ENCODE measurements at regions of chrX and their contacts with region 1.

Region 1: DNA sequence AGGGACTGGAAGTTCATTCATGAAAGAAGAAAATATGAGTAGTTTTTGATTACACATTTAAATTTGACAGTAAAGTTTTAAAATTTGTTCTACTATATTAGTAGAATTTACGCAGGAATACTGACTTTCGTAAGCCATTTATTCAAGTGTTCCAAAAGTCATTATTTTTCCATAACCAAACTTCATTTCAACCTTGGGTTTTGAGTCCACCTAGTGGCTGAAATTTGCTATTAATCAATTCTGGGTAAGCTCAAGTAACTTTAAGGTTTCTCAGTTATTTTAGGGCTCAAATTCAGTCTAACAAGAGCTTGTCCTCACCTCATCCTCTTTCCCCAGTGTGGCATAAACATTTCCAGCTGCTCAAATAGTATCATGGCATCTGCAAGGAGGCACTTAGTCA is 175.4 kb downstream of the SH3BGRL start:
- DNase-seq: peak in 3 of 5 donors; percentile 1 to 8 (median 2)
- H3K4me3 ChIP-seq: no peak overlapping the region
- H3K4me3 Mint-ChIP-seq: no peak overlapping the region
- H3K27ac ChIP-seq: no peak overlapping the region
- H3K27ac Mint-ChIP-seq: no peak overlapping the region
- H3K4me1 ChIP-seq: no peaks in the 10 kb centered on the region
- H3K4me1 Mint-ChIP-seq: no peaks in the 10 kb centered on the region
- H3K27me3 ChIP-seq: no peaks in the 10 kb centered on the region
- H3K27me3 Mint-ChIP-seq: peaks cover 0 to 5% of the 10 kb centered on the region in 2 donors

Region 2: DNA sequence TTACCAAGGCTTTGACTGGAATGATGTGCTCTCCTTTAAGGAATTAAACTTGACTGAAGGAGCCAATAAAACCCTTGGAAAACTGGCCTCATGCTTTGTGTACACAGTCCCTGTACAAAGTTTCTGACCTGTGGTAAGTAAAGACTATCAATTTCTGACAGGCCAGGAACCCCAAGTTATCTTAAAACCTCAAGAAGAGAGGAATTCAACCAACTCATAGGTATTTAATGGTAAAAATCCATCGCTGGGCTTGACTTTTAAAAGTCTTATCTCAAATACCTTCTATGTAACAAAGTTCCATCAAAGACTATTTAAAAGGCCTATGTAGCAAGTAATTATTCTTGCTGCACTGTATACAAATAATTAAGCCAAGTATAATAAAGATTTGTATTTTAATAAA is 1060.8 kb before region 1 on chrX:
- CTCF ChIA-PET with region 1: no interaction called
- POLR2A ChIA-PET with region 1: no interaction called
- intact Hi-C with region 1: no loop called
- DNase-seq: no peak
- H3K4me3 ChIP-seq: no peak overlapping the region
- H3K4me3 Mint-ChIP-seq: no peak overlapping the region
- H3K27ac ChIP-seq: no peak overlapping the region
- H3K27ac Mint-ChIP-seq: no peak overlapping the region
- H3K4me1 ChIP-seq: no peaks in the 10 kb centered on the region
- H3K4me1 Mint-ChIP-seq: no peaks in the 10 kb centered on the region
- H3K27me3 ChIP-seq: no peaks in the 10 kb centered on the region
- H3K27me3 Mint-ChIP-seq: peaks cover 0 to 2% of the 10 kb centered on the region in 2 donors

Region 3: GRCh38 chrX:81174286-81174685 is 203.0 kb before region 1 on chrX:
- CTCF ChIA-PET with region 1: interaction called, 4 read pairs
- POLR2A ChIA-PET with region 1: no interaction called
- intact Hi-C with region 1: loop called (anchors 1 kb)
- DNase-seq: peak in 3 of 5 donors; percentile 3 to 16 (median 4)
- H3K4me3 ChIP-seq: no peak overlapping the region
- H3K4me3 Mint-ChIP-seq: no peak overlapping the region
- H3K27ac ChIP-seq: no peak overlapping the region
- H3K27ac Mint-ChIP-seq: no peak overlapping the region
- H3K4me1 ChIP-seq: no peaks in the 10 kb centered on the region
- H3K4me1 Mint-ChIP-seq: no peaks in the 10 kb centered on the region
- H3K27me3 ChIP-seq: no peaks in the 10 kb centered on the region
- H3K27me3 Mint-ChIP-seq: no peaks in the 10 kb centered on the region

Region 4: GRCh38 chrX:81542255-81542654 is 164.9 kb after region 1 on chrX:
- CTCF ChIA-PET with region 1: no interaction called
- POLR2A ChIA-PET with region 1: no interaction called
- intact Hi-C with region 1: no loop called
- DNase-seq: no peak
- H3K4me3 ChIP-seq: no peak overlapping the region
- H3K4me3 Mint-ChIP-seq: no peak overlapping the region
- H3K27ac ChIP-seq: no peak overlapping the region
- H3K27ac Mint-ChIP-seq: no peak overlapping the region
- H3K4me1 ChIP-seq: no peaks in the 10 kb centered on the region
- H3K4me1 Mint-ChIP-seq: no peaks in the 10 kb centered on the region
- H3K27me3 ChIP-seq: no peaks in the 10 kb centered on the region
- H3K27me3 Mint-ChIP-seq: no peaks in the 10 kb centered on the region